ENCODE measurements at regions of chr1 and their contacts with region 1.

Region 1: DNA sequence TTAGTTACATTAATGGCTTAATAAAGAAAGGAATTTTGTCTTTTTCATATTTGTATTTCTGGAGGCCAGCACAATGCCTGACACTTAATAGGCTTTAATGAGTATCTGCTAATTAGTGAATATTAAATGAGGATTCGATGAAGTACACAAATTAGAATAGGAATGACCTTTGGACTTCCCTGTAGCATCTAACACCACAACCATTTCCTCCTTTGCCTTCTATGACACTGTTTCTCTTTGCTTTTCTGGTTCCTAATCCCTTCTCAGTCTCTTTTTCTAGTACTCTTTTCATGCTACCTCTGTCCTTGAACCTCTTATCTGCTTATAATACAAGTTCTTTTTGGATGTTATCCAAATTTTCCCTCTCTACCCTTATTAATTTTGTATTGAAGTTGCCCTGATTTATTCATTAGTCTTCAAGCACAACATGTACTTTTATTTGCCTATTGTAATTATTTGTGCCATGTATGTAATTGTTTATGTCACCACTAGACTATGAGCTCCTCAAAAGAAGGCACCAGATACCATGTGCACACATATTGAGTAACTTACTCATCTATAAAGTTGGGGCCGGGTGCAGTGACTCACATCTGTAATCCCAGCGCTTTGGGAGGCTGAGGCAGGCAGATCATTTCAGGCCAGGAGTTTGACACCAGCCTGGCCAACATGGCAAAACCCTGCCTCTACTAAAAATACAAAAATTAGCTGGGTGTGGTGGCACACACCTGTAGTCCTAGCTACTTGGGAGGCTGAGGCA is 23.8 kb downstream of the RPS27 start:
- DNase-seq: no peak
- H3K4me3 Mint-ChIP-seq: no peak overlapping the region
- H3K27ac Mint-ChIP-seq: no peak overlapping the region
- H3K4me1 Mint-ChIP-seq: no peaks in the 10 kb centered on the region
- H3K27me3 Mint-ChIP-seq: no peaks in the 10 kb centered on the region

Region 2: GRCh38 chr1:154115180-154115579 is 100.8 kb after region 1 on chr1:
- CTCF ChIA-PET with region 1: no interaction called
- intact Hi-C with region 1: loop called (anchors 10 kb)
- DNase-seq: no peak
- H3K4me3 Mint-ChIP-seq: no peak overlapping the region
- H3K27ac Mint-ChIP-seq: no peak overlapping the region
- H3K4me1 Mint-ChIP-seq: peaks cover 3% of the 10 kb centered on the region
- H3K27me3 Mint-ChIP-seq: no peaks in the 10 kb centered on the region

Measured in activated naive CD4-positive, alpha-beta T cell treated with anti-CD3 and anti-CD28 coated beads for 36 hours (primary cell).